Thyroid gland (tissue), 4 donors: ENCODE measurements at regions of chr21 and their contacts with region 1.

Region 1: DNA sequence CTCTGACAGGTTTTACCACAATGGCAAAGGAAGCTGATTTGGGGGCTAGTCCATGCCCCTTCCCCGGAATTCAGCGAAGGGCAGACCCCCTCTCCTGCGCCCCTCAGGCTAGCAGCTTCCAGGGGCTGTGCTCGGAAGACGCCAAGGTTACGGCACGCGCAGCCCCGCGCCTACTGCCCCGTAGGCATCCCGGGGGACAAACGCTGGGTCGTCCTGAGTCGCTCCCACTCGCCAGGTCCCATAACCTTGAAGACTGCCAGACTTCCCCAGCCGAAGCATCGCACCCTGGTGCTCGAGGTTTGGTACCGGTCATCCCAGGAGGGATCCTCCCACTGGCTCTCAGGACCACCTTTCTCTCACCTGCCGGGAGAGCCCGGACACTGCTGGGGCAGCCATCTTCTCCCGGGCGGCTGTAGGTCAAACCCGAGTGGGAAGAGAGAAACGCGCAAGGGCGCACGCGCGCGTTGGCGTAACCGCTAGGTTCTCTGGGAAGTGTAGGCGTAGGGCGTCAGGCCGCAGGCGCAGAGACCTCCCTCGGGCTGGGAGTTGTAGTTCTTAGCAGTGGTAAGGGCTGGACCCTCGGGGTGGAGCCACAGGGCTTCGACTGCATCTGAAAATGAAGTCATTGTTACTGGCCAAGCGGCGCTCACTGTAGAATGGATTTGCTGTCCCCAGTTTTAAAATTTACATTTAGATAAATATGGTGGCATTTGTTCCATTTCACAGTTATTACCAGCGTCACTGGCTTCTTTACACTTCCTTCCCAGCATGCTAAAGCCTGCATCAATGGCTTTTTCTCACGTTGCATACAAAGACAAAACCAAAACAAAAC is at the start of gene ATP5PO:
- DNase-seq: peak; percentile 98
- H3K4me3 ChIP-seq: peak within 1 kb of the TSS; percentile 72 to 95 (median 84)
- H3K27ac ChIP-seq: peak within 1 kb of the TSS; percentile 62 to 86 (median 80)
- H3K4me1 ChIP-seq: peaks cover 0 to 3% of the 10 kb centered on the region in 2 donors
- H3K27me3 ChIP-seq: no peaks in the 10 kb centered on the region
- CTCF ChIP-seq: no peak
- POLR2A ChIP-seq: peak in 1 of 2 donors; percentile 92
- total RNA-seq, gene ATP5PO: 201 to 300 (median 256) TPM

Region 2: DNA sequence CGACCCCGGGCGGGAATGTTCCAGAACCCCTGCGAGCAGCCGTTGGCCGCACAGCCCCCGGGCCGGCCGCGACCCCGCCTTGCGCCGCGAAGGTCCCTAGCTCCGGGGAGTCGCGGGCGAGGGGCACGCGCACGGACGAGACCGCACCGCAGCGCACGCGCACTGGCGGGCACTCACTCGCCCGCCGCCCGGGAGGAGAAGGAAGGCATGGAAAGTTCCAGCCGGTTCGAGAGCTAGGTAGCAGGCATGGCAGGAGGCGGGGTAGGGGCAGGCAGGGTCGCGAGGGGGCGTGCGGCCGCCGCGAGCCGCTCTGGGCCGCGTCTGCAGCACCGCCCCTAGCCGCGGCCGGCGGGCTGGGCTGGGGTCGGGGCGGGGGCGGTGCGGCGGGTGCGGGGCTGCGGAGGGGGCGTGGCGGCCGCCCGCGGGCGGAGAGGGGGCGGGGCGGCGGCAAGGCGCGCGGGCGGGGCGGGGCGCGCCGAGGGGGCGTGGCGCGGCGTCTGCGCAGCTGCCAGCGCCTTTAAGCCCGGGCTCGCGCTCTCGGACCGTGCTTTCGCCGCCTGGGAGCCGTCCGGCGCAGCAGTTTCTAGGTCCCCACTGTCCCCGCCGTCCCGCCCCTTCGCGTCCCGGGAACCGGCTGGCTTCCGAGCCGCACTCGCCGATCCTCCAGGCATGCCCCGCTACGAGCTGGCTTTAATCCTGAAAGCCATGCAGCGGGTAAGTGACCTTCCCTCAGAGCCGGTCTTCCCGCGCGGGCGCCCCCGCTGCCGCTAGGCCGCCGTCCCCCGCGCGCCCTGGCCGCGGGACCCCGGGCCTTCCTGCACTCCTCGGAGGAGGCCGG is 157.7 kb after region 1 on chr21 and contains the starts of genes MRPS6 and SLC5A3:
- intact Hi-C with region 1: loop called (anchors 10 kb)
- DNase-seq: peak; percentile 87 to 91
- H3K4me3 ChIP-seq: peak within 1 kb of the TSS; percentile 45 to 61 (median 53)
- H3K27ac ChIP-seq: peak within 1 kb of the TSS; percentile 89 to 100 (median 90)
- H3K4me1 ChIP-seq: peaks cover 9 to 13% of the 10 kb centered on the region in 2 donors
- H3K27me3 ChIP-seq: no peaks in the 10 kb centered on the region
- CTCF ChIP-seq: peak in 2 of 6 experiments; percentile 11 to 53
- POLR2A ChIP-seq: peak; percentile 96 to 99
- total RNA-seq, gene MRPS6: 64.9 to 104 (median 75.9) TPM
- total RNA-seq, gene SLC5A3: 125 to 171 (median 161) TPM